HEK293 (cell line): ENCODE measurements at regions of chr6 and their contacts with region 1.

Region 1: DNA sequence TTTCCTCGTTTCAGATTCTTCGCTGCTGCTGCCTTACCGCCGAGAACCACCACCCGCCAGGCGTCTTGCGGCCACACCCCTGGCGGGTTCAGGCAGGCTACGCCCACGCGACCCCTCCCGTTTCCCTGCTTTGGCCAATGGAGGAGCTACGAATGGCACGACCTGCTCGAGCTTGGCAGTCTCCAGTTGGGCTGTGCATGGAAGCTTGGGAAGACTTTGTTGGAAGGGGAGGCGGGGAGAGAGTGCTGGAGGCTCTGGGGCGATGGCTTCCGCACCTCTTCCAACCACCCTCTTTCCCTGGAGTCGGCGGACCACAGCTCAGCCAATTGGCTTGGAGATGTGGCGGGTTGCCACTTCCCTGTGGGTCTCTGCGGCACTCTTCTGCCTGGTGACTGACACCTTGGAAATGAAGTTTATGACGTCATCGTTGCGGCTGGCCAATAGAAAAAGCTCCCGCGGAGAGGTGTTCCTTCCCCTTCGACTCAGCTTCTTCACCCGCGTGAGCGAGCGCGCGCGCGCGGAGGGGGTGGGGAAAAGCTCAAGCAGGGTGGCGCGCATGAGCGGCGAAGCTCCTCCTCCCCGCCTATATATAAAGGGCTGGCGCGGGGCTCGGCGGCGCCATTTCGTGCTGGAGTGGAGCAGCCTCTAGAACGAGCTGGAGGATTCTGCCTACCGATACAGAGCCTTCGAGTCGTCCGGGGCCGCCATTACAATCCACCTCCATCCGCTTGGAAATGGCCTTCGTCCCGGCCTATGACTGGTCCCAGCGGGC is 3.4 kb downstream of the BRD2 start:
- H3K4me3 ChIP-seq: peak overlapping the region; percentile 97
- H3K27ac ChIP-seq: peak overlapping the region; percentile 99
- H3K4me1 ChIP-seq: peaks cover 20% of the 10 kb centered on the region
- CTCF ChIP-seq: no peak; the same call in 1 of the 2 replicates

Region 2: DNA sequence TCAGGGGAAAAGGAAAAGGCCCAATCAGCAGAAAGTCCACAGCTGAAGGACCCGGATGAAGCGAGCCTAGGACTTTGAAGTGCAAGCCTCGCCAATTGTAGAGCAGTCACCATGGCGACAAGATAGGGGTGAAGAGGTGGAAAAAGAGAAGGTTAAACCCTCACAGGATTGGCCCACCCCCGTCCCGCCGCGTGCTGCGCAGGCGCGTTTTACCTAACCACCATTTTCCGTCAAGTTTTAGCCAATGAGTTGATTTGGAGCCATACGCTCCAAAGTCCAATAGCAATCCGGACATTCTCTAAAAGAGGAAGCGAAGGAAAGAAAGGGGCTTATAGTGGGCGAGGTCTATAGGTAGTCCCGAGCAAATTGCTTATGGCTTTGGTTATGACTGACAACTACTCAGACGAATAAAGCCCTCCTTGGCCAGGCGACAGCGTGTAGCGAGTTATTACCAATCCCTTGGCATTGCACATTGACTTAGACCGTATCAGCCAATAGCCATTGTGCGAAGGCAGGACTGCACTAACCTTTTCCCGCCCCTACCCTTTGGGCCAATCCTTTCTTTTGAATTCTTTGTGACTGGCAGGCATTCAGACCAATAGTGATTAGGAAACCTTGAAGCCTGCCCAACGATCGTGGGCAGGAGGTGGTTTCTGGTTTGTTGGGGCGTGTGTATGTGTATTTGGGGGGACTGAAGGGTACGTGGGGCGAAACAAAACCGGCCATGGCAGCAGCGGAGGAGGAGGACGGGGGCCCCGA is 793.8 kb before region 1 on chr6 and contains the start of gene RNF5:
- CTCF ChIA-PET with region 1: no interaction called
- POLR2A ChIA-PET with region 1: interaction called, 14 read pairs
- H3K4me3 ChIP-seq: peak within 1 kb of the TSS; percentile 68
- H3K27ac ChIP-seq: peak within 1 kb of the TSS; percentile 80
- H3K4me1 ChIP-seq: peaks cover 14% of the 10 kb centered on the region
- CTCF ChIP-seq: no peak

Region 3: DNA sequence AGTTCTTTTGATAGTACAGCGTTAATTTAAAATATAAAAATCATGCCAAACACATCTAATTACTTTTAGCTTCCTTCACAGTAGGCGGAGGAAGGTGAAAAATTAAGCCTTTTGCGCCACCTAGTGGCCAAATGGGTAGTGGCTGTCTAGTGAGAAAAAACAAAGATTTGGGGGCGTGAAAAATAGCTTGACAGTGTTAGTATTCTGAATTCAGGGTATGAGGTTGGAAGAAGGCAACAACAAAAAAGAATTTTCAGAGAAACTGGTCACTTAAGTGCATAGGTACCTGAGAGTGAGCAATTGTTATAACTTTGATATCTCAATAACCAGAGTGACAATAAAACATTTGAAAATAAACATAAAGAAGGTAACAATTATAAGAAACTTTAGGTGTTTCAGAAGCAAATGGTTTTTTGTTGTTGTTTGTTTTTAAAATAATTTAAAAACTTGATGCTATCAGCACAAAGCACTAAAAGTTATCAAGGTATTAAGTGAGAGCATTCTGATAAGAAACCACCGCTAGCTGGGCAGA is 103.4 kb before region 1 on chr6:
- CTCF ChIA-PET with region 1: interaction called, 9 read pairs
- POLR2A ChIA-PET with region 1: interaction called, 12 read pairs
- H3K4me3 ChIP-seq: no peak overlapping the region
- H3K27ac ChIP-seq: no peak overlapping the region
- H3K4me1 ChIP-seq: 0 out of 2 replicates have a peak, but pooled peaks cover 3% of the 10 kb centered on the region
- CTCF ChIP-seq: peak; percentile 63

Region 4: DNA sequence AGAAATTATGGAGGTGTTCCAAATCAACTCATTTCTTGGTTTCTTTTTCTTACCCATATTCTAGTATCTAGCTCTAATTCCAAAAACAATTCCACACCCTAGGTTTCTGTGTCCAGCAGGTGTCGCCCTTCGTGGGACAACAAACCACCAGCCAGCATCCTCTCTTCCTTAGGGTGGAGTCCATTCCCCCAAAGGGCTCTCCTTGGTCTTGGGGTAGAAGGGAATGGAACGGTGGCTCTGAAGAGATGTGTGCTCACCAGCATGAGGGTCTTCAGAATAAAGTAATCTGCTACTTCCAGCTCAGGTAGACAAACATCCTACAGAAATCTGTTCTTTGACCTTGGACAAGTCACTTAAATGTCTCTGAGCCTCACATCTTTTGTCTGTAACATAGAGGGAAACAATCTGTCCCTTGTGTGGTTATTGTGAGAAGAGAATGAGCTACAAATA is 38.1 kb before region 1 on chr6:
- CTCF ChIA-PET with region 1: interaction called, 59 read pairs
- POLR2A ChIA-PET with region 1: interaction called, 37 read pairs
- H3K4me3 ChIP-seq: no peak overlapping the region
- H3K27ac ChIP-seq: no peak overlapping the region
- H3K4me1 ChIP-seq: no peaks in the 10 kb centered on the region
- CTCF ChIP-seq: peak; percentile 37; the same call in 1 of the 2 replicates

Region 5: GRCh38 chr6:33082702-33083101 is 110.9 kb after region 1 on chr6:
- CTCF ChIA-PET with region 1: no interaction called
- POLR2A ChIA-PET with region 1: interaction called, 18 read pairs
- H3K4me3 ChIP-seq: no peak overlapping the region
- H3K27ac ChIP-seq: no peak overlapping the region
- H3K4me1 ChIP-seq: peaks cover 5% of the 10 kb centered on the region
- CTCF ChIP-seq: peak; percentile 48; the same call in 1 of the 2 replicates

Region 6: GRCh38 chr6:33276864-33277662 is 305.3 kb after region 1 on chr6 and contains the start of gene B3GALT4:
- CTCF ChIA-PET with region 1: no interaction called
- POLR2A ChIA-PET with region 1: interaction called, 26 read pairs
- H3K4me3 ChIP-seq: peak within 1 kb of the TSS; percentile 56
- H3K27ac ChIP-seq: peak within 1 kb of the TSS; percentile 79
- H3K4me1 ChIP-seq: peaks cover 31% of the 10 kb centered on the region
- CTCF ChIP-seq: peak; percentile 97